ENCODE measurements at regions of chr18 and their contacts with region 1.

Region 1: DNA sequence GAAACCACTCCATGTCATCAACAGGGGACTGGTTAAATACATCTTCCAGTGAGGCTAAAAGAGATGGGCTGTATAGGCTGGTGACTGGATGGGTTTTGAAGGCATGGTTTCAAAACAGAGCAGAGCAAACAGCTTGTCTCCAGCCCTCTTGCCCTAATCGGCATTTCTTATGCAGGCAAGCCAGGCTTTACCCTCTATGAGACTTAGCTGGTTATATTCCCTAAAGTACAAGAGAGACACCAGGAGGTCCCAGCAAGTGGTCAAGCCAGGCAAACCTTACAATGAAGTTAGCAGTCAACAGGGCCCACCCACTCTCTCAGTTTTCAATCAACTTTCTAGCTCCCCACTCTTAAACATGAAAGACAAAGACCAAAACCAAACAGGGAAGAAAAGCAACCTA is 19.0 kb downstream of the OSBPL1A start:
- DNase-seq: no peak
- H3K4me3 ChIP-seq: no peak overlapping the region
- H3K27ac ChIP-seq: no peak overlapping the region
- H3K4me1 ChIP-seq: no peaks in the 10 kb centered on the region
- H3K27me3 ChIP-seq: no peaks in the 10 kb centered on the region
- CTCF ChIP-seq: no peak

Region 2: GRCh38 chr18:23812546-23813440 is 565.8 kb before region 1 on chr18:
- CTCF ChIA-PET with region 1: no interaction called
- dilution Hi-C with region 1: no loop called
- in situ Hi-C with region 1: no loop called
- intact Hi-C with region 1: no loop called
- DNase-seq: peak; percentile 36
- H3K4me3 ChIP-seq: no peak overlapping the region
- H3K27ac ChIP-seq: no peak overlapping the region
- H3K4me1 ChIP-seq: no peaks in the 10 kb centered on the region
- H3K27me3 ChIP-seq: no peaks in the 10 kb centered on the region
- CTCF ChIP-seq: peak; percentile 42 to 56

Region 3: DNA sequence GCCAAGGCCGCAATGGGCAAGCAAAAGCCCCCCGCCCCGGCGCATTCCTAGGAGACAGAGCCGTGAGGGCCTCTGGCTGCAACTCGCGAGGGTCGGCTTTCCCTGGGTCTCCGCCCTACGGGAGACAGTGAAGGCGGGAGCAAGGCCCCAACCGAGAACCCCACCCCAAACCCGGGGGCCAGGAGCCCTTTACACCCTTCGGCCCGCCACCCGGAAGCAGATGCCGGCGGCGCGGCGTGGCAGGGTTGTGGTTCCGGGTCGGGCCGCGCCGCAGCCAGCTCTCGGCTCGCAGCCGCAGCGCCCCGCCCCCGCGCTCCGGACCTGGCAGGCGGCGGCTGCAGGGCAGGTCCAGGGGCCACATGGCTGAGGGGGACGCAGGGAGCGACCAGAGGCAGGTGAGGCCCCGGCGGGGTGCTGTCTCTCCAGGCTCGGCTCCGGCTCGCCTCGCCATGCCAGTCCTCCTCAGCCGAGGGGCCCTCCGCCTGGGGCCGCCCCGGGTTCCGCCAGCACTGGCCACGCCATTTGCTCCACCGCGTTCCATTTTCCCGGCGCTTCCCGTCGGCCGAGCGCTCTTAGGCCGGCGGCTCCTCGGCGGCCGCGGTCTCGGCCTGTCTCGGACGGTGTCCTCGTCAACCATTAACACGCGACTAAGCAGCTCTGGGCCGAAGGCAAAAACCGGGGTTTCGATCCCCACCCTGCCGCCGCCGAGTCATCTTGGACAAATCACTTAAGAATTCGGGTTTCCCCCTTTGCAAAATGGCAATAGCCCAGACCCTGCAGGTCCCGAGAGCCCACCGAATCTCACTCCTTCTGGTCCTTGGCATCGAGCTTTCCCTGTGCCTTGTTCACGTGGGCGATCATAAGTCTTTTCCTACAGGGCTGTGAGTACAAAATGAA is 48.0 kb after region 1 on chr18 and contains the start of gene IMPACT:
- CTCF ChIA-PET with region 1: no interaction called
- dilution Hi-C with region 1: no loop called
- in situ Hi-C with region 1: no loop called
- intact Hi-C with region 1: no loop called
- DNase-seq: peak; percentile 76
- H3K4me3 ChIP-seq: peak within 1 kb of the TSS; percentile 83 to 95 (median 87)
- H3K27ac ChIP-seq: peak within 1 kb of the TSS; percentile 88
- H3K4me1 ChIP-seq: peaks cover 12% of the 10 kb centered on the region
- H3K27me3 ChIP-seq: no peaks in the 10 kb centered on the region
- CTCF ChIP-seq: no peak
- total RNA-seq, gene IMPACT: 38.8 to 45.2 TPM

Region 4: DNA sequence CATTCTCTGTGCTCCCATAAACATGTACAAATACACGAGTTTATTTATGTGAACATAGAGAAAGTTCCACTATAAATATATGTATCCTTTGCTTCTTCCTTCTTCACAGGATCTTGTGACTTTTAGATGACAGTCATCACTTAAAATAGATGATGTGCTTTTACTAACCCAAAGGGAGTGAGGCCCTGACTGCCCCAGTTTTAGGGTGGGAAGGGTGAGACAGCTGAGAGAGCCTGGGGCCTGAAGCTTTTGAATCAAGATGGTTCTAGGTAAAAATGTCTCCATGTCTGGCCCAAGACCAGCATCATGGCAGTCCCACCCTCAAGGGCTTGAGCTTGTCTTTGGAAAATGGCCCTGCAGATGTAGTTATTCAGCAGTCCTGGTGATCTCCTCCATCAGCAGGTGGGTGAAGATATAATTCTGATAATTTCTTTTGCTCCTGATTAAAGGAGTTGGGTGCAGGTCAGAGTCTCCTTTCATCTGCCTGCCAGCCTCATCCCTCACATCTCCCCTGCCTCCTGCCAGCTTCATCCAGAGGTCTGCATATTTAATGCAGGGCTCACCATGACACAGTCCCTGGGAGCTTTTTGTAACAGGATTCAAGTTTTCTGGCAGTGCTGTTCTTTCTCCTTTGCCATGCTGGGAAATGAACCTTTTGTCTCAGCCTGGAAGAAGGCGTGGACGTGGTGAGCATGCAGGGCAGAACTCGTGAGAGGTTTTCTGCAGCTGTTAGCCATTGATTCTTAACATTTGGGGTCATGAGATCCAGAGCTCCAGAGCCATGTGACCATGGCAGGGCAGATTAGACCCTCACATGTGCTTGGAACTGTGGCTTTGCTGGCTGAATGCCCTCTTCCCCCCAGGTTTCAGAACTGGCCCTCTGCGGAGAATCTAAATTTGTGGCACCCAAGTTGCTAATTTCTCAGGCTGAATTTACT is 84.5 kb after region 1 on chr18:
- CTCF ChIA-PET with region 1: no interaction called
- dilution Hi-C with region 1: loop called (anchors 5 kb)
- in situ Hi-C with region 1: no loop called
- intact Hi-C with region 1: no loop called
- DNase-seq: no peak
- H3K4me3 ChIP-seq: no peak overlapping the region
- H3K27ac ChIP-seq: no peak overlapping the region
- H3K4me1 ChIP-seq: no peaks in the 10 kb centered on the region
- H3K27me3 ChIP-seq: no peaks in the 10 kb centered on the region
- CTCF ChIP-seq: no peak

Measured in mammary epithelial cell (primary cell).